ENCODE measurements at regions of chr14 and their contacts with region 1.

Region 1: DNA sequence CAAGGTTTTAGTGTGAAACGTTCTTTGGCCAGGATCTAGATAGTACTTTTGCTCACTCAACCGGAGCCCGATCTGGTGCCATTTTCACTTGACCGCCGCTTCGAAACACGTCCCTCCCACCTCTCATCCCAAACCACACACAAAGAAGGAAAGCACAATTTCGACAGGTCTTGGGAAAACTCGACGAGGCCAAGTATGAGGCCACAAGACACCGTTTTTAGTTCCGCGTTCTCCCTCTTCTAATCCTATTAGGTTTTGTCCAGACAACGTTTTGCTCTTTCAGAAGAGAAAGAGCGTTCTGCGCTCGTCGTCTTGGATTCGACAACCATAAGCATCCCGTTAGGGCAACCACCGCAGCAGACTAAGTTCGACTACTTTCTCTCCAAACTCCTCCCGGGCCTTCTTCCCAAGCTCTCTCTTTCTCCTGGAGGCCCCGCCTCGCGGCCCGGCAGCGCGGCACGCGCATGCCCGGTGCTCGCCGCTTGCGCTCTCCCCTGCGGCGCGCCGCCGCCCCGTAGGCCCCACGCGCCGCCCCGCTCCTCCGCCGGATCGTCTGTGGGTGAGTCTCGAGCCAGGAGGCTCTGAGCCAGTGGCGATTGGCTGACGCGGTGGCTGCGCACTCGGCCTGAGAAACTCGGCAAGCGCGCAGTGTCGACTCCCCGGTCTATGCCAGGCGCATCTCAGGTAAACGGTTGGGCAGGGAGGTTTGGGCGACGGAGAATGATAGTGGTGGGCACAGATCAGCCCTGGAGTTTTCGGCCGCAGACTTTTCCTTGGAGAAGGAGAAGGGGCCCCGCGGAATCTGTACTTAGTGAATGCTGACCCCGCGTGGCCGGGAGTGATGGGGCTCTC is at the start of gene MIPOL1:
- DNase-seq: peak; percentile 59 to 81
- ATAC-seq: peak; percentile 93
- H3K4me3 ChIP-seq: peak within 1 kb of the TSS; percentile 70 to 89 (median 73)
- H3K27ac ChIP-seq: peak within 1 kb of the TSS; percentile 84 to 93 (median 88)
- H3K4me1 ChIP-seq: peaks cover 8 to 10% of the 10 kb centered on the region in 2 donors
- H3K27me3 ChIP-seq: no peaks in the 10 kb centered on the region
- CTCF ChIP-seq: peak in 4 of 5 experiments; percentile 9 to 44 (median 22)
- POLR2A ChIP-seq: peak; percentile 39 to 42
- total RNA-seq, gene MIPOL1: 3.1 to 13.7 (median 4.1) TPM

Region 2: DNA sequence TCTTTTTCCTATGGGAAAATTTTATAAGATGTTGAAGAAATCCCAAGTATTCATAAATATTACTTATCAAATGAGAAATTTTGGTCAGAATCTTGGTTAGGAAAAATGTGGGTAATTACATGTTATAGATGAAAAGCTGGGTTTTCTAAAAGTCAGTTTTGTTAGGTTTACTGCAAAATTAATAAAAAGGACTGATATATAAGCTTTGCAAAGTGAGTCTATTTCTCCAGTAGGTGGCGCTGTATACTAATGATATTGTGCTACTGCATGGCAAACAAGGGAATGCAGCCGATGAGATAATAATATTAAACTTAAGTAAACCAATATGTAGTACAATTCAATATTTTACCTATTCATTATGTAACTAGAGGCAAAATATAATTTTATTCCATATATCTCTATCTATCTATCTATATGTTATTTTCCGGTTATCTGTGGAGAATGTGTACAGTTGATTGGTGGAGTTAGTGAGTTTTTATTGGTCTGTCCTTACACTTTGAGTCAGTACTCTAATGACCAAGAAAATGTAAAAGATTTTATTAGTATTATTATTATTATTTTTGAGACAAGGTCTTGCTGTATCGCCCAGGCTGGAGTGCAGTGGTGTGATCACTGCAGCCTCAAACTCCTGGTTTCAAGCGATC is 33.0 kb after region 1 on chr14:
- in situ Hi-C with region 1: no loop called
- intact Hi-C with region 1: loop called (anchors 5 kb)
- DNase-seq: no peak
- ATAC-seq: peak in 1 of 2 donors; percentile 55
- H3K4me3 ChIP-seq: no peak overlapping the region
- H3K27ac ChIP-seq: no peak overlapping the region
- H3K4me1 ChIP-seq: no peaks in the 10 kb centered on the region
- H3K27me3 ChIP-seq: no peaks in the 10 kb centered on the region
- CTCF ChIP-seq: peak in 4 of 5 experiments; percentile 43 to 76 (median 56)
- POLR2A ChIP-seq: no peak

Region 3: GRCh38 chr14:37241198-37241597 is 43.6 kb after region 1 on chr14:
- in situ Hi-C with region 1: no loop called
- intact Hi-C with region 1: no loop called
- DNase-seq: no peak
- ATAC-seq: no peak
- H3K4me3 ChIP-seq: no peak overlapping the region
- H3K27ac ChIP-seq: no peak overlapping the region
- H3K4me1 ChIP-seq: no peaks in the 10 kb centered on the region
- H3K27me3 ChIP-seq: no peaks in the 10 kb centered on the region
- CTCF ChIP-seq: no peak
- POLR2A ChIP-seq: no peak

Measured in gastrocnemius medialis (tissue), 4 donors.